MCF 10A (cell line): ENCODE measurements at regions of chr7 and their contacts with region 1.

Region 1: GRCh38 chr7:79298145-79298760 is 155.2 kb downstream of the MAGI2 start:
- DNase-seq: peak; percentile 55
- H3K4me3 Mint-ChIP-seq: no peak overlapping the region
- H3K27ac Mint-ChIP-seq: no peak overlapping the region
- H3K4me1 Mint-ChIP-seq: peaks cover 7% of the 10 kb centered on the region
- H3K27me3 Mint-ChIP-seq: no peaks in the 10 kb centered on the region
- CTCF ChIP-seq: peak; percentile 62

Region 2: GRCh38 chr7:79741684-79742083 is 443.4 kb after region 1 on chr7:
- CTCF ChIA-PET with region 1: no interaction called
- POLR2A ChIA-PET with region 1: no interaction called
- intact Hi-C with region 1: loop called (anchors 1 kb)
- DNase-seq: no peak
- H3K4me3 Mint-ChIP-seq: no peak overlapping the region
- H3K27ac Mint-ChIP-seq: no peak overlapping the region
- H3K4me1 Mint-ChIP-seq: no peaks in the 10 kb centered on the region
- H3K27me3 Mint-ChIP-seq: peaks cover 73% of the 10 kb centered on the region
- CTCF ChIP-seq: peak; percentile 5

Region 3: GRCh38 chr7:80047856-80048459 is 749.7 kb after region 1 on chr7:
- CTCF ChIA-PET with region 1: interaction called, 25 read pairs
- POLR2A ChIA-PET with region 1: no interaction called
- intact Hi-C with region 1: loop called (anchors 5 kb)
- DNase-seq: no peak
- H3K4me3 Mint-ChIP-seq: no peak overlapping the region
- H3K27ac Mint-ChIP-seq: no peak overlapping the region
- H3K4me1 Mint-ChIP-seq: no peaks in the 10 kb centered on the region
- H3K27me3 Mint-ChIP-seq: peaks cover 29% of the 10 kb centered on the region
- CTCF ChIP-seq: peak; percentile 33